CD4-positive, alpha-beta T cell (primary cell): ENCODE measurements at regions of chr2 and their contacts with region 1.

Region 1: DNA sequence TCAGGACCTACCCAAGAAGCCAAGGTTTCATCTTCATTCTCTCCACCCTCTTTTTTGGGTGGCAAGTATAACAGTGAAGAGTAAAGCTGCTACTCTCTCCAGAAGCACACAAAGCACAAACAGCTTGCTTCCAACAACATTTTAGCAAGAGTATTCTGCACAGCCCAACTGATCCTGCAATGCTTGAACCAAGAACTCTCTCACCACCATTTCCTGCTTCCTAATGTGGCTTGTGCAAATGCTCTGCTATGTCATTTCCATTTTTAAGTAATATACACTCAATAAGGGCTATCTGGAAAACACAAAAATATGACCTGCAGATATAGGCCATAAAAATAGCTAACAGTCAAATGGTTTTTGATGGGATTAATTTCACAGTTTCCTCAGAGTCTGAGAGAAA is 24.1 kb upstream of the IHH start:
- DNase-seq: no peak
- ATAC-seq: no peak
- H3K4me3 ChIP-seq: no peak overlapping the region
- H3K4me3 Mint-ChIP-seq: no peak overlapping the region
- H3K27ac ChIP-seq: no peak overlapping the region
- H3K27ac Mint-ChIP-seq: no peak overlapping the region
- H3K4me1 ChIP-seq: no peaks in the 10 kb centered on the region
- H3K4me1 Mint-ChIP-seq: no peaks in the 10 kb centered on the region
- H3K27me3 ChIP-seq: no peaks in the 10 kb centered on the region
- H3K27me3 Mint-ChIP-seq: no peaks in the 10 kb centered on the region
- CTCF ChIP-seq: no peak

Region 2: GRCh38 chr2:218915021-218915420 is 169.8 kb before region 1 on chr2:
- CTCF ChIA-PET with region 1: no interaction called
- POLR2A ChIA-PET with region 1: no interaction called
- intact Hi-C with region 1: no loop called
- DNase-seq: no peak
- ATAC-seq: no peak
- H3K4me3 ChIP-seq: no peak overlapping the region
- H3K4me3 Mint-ChIP-seq: no peak overlapping the region
- H3K27ac ChIP-seq: no peak overlapping the region
- H3K27ac Mint-ChIP-seq: no peak overlapping the region
- H3K4me1 ChIP-seq: no peaks in the 10 kb centered on the region
- H3K4me1 Mint-ChIP-seq: no peaks in the 10 kb centered on the region
- H3K27me3 ChIP-seq: peaks cover 1 to 3% of the 10 kb centered on the region in 2 experiments
- H3K27me3 Mint-ChIP-seq: peaks cover 41% of the 10 kb centered on the region
- CTCF ChIP-seq: no peak

Region 3: GRCh38 chr2:219049282-219049681 is 35.5 kb before region 1 on chr2:
- CTCF ChIA-PET with region 1: no interaction called
- POLR2A ChIA-PET with region 1: no interaction called
- intact Hi-C with region 1: loop called in 1 of 2 experiments (anchors 1 kb)
- DNase-seq: no peak
- ATAC-seq: no peak
- H3K4me3 ChIP-seq: no peak overlapping the region
- H3K4me3 Mint-ChIP-seq: no peak overlapping the region
- H3K27ac ChIP-seq: no peak overlapping the region
- H3K27ac Mint-ChIP-seq: no peak overlapping the region
- H3K4me1 ChIP-seq: no peaks in the 10 kb centered on the region
- H3K4me1 Mint-ChIP-seq: no peaks in the 10 kb centered on the region
- H3K27me3 ChIP-seq: peaks cover 26 to 62% of the 10 kb centered on the region in 2 experiments
- H3K27me3 Mint-ChIP-seq: peaks cover 87% of the 10 kb centered on the region
- CTCF ChIP-seq: no peak

Region 4: DNA sequence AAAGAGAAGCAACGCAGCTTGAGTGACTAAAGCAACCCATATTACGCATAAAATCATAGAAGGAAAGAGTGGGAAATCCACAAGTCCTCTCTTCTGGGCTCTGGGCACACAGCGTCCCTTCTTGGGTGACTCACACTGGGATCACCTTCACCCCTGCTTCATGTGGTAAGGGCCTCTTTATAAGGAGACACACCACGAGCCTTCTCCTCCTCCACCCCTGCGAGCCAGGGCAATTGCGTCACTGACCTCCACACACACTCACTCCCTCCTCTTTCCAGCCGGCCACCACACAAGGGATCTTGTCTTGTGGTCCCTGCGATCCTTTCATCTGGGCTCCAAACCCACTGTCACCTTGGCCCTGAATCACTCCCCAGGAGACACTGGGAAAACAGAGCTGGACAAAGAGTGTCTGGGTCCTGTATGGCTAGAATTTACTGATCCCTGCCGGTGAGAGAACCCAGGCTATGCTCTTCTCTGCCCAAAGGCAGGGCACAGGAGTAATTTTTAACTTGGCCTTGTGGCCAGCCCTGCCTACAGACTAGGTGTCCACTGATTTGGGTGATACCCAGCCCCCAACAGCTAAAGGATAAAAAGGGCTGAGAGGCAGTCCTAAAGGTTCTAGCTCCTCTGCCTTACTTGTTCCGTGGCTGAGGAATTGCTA is 40.6 kb after region 1 on chr2:
- CTCF ChIA-PET with region 1: no interaction called
- POLR2A ChIA-PET with region 1: no interaction called
- intact Hi-C with region 1: loop called in 1 of 2 experiments (anchors 2 kb)
- DNase-seq: no peak
- ATAC-seq: no peak
- H3K4me3 ChIP-seq: no peak overlapping the region
- H3K4me3 Mint-ChIP-seq: no peak overlapping the region
- H3K27ac ChIP-seq: no peak overlapping the region
- H3K27ac Mint-ChIP-seq: no peak overlapping the region
- H3K4me1 ChIP-seq: peaks cover 7% of the 10 kb centered on the region
- H3K4me1 Mint-ChIP-seq: peaks cover 30% of the 10 kb centered on the region
- H3K27me3 ChIP-seq: no peaks in the 10 kb centered on the region
- H3K27me3 Mint-ChIP-seq: no peaks in the 10 kb centered on the region
- CTCF ChIP-seq: no peak